Heart right ventricle (tissue), 16 donors: ENCODE measurements at regions of chr2 and their contacts with region 1.

Region 1: DNA sequence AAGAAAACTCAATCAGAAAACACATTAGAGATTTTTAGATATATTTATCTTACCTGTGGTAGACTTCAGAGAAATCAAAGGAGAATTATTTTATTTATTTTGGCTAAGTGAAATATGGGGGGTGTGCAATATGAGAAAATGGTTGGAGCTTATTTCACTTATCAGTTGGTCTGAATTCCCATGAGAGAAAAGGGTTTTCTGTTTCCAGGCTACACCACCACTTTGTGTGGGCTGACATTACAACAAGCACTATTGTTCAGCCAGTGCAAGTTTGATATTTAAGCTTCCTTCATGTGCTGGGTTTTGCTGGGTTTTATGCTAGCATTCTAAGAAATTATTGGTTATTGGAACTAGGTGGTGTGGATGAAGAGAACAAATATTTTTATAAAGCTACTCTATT is 33.5 kb downstream of the RMND5A start:
- DNase-seq: no peak
- ATAC-seq: no peak
- H3K4me3 ChIP-seq: no peak overlapping the region
- H3K27ac ChIP-seq: no peak overlapping the region
- H3K4me1 ChIP-seq: peaks cover under 1 to 40% (median 15%) of the 10 kb centered on the region in 9 donors
- H3K27me3 ChIP-seq: no peaks in the 10 kb centered on the region
- CTCF ChIP-seq: no peak

Region 2: GRCh38 chr2:86649119-86649947 is 104.3 kb before region 1 on chr2:
- intact Hi-C with region 1: no loop called
- DNase-seq: no peak
- ATAC-seq: no peak
- H3K4me3 ChIP-seq: no peak overlapping the region
- H3K27ac ChIP-seq: no peak overlapping the region
- H3K4me1 ChIP-seq: no peaks in the 10 kb centered on the region
- H3K27me3 ChIP-seq: no peaks in the 10 kb centered on the region
- CTCF ChIP-seq: no peak

Region 3: DNA sequence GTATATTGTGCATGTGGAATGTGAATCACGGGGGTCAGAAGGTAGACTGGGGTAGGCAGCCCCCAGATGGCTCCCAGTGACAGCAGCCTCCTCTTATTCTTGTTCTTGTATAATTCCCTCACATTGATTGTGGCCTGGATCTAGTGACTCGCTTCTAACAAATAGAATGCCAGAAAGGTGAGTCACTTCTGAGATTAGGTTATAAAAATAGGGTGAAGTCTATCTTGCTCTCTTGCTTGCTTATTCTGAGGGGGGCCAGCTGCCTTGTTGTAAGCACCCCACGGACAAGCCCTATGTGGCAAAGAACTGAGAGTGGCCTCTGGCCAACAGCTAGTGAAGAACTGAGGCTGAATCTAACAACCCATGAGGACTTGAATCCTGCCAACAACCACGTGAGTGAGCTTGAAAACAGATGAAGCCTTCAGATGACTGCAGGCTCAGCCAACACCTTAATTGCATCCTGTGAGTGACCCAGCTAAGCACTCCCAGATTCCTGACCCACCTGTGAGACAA is 49.1 kb before region 1 on chr2:
- intact Hi-C with region 1: loop called in 2 of 10 experiments (anchors 5 to 10 kb)
- DNase-seq: peak; percentile 29 to 78
- ATAC-seq: peak; percentile 71 to 93 (median 92)
- H3K4me3 ChIP-seq: peak overlapping the region in 2 of 10 donors; percentile 17 to 23
- H3K27ac ChIP-seq: peak overlapping the region; percentile 66 to 90 (median 84)
- H3K4me1 ChIP-seq: peaks cover 0 to 30% (median 7%) of the 10 kb centered on the region in 9 donors
- H3K27me3 ChIP-seq: no peaks in the 10 kb centered on the region
- CTCF ChIP-seq: no peak